ENCODE measurements at regions of chr11 and their contacts with region 1.

Region 1: GRCh38 chr11:18721561-18722292 is 4.3 kb downstream of the IGSF22 start:
- DNase-seq: no peak
- H3K4me3 ChIP-seq: peak overlapping the region; percentile 46
- H3K27me3 ChIP-seq: no peaks in the 10 kb centered on the region; the same call in 1 of the 2 replicates
- CTCF ChIP-seq: peak; percentile 73

Region 2: GRCh38 chr11:18731949-18732821 is 10.5 kb after region 1 on chr11:
- CTCF ChIA-PET with region 1: interaction called, 85 read pairs
- POLR2A ChIA-PET with region 1: no interaction called
- DNase-seq: no peak
- H3K4me3 ChIP-seq: no peak overlapping the region
- H3K27me3 ChIP-seq: 0 out of 2 replicates have a peak, but pooled peaks cover 2% of the 10 kb centered on the region
- CTCF ChIP-seq: peak; percentile 99

Region 3: GRCh38 chr11:18765554-18765953 is 43.8 kb after region 1 on chr11:
- CTCF ChIA-PET with region 1: interaction called, 24 read pairs
- POLR2A ChIA-PET with region 1: no interaction called
- DNase-seq: no peak
- H3K4me3 ChIP-seq: no peak overlapping the region
- H3K27me3 ChIP-seq: no peaks in the 10 kb centered on the region
- CTCF ChIP-seq: no peak

Measured in BJ (cell line).